SK-N-SH (cell line): ENCODE measurements at regions of chr3 and their contacts with region 1.

Region 1: DNA sequence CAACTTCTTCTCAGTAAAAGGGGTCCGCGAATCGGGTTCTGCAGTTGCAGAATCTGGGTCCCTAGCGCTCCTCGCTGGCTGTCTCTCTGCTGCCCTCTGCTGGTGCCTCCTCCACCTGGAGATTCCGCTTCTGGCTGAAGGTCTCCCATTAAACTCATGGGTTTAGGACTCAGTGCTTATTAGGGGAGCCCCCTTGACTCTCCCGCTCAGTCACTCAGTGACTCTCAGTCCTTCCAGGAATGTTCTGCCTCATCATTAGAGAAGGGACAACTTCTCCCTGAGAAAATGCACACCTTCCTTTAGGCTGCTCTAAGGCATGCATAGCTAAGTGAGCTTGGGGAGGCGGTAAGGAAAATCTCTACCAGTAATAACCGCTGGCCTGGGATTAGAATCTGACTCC is 7.1 kb downstream of the CPN2 start:
- DNase-seq: peak; percentile 91
- H3K4me3 ChIP-seq: no peak overlapping the region; a peak in 1 of 4 replicates
- H3K27ac ChIP-seq: no peak overlapping the region
- H3K4me1 ChIP-seq: peaks cover 0 to 9% of the 10 kb centered on the region in 2 experiments; a peak in 1 of 4 replicates
- H3K27me3 ChIP-seq: no peaks in the 10 kb centered on the region
- CTCF ChIP-seq: peak; percentile 97
- EP300 ChIP-seq: no peak
- RAD21 ChIP-seq: peak; percentile 68

Region 2: DNA sequence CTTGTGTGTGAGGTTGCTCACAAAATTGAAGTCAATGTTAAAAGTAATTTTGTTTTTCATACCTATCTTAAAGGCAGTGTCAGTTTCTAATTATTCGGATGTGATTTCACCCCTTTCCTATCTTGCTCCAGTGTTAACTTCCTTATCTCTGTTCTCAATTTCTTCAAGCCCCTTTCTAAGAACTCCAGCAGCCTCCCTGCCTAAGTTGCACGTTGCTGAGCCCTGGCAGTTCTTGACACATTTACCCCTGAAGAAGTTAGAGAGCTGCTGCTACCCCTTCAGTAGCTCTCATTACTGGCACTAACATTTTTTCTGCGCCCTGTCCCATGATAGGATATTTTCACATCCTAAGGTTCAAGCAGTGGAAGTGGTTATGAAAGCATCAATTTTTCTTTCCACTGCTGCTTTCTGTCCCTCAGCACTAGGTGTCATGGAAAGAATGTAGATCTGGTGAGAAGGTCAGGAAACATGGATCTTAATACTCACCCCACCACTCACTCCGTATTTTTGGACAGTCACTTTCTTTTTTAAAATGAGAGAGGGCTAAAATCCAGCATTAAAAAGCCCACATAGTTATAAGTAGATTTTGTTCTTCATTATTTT is 688.1 kb before region 1 on chr3:
- CTCF ChIA-PET with region 1: interaction called, 12 read pairs
- POLR2A ChIA-PET with region 1: no interaction called
- DNase-seq: no peak
- H3K4me3 ChIP-seq: no peak overlapping the region
- H3K27ac ChIP-seq: no peak overlapping the region
- H3K4me1 ChIP-seq: no peaks in the 10 kb centered on the region
- H3K27me3 ChIP-seq: no peaks in the 10 kb centered on the region
- CTCF ChIP-seq: no peak
- EP300 ChIP-seq: no peak
- RAD21 ChIP-seq: no peak

Region 3: GRCh38 chr3:194364652-194365434 is 20.8 kb after region 1 on chr3:
- CTCF ChIA-PET with region 1: interaction called, 85 read pairs
- POLR2A ChIA-PET with region 1: no interaction called
- DNase-seq: peak; percentile 72
- H3K4me3 ChIP-seq: no peak overlapping the region
- H3K27ac ChIP-seq: peak overlapping the region; percentile 20 to 74; a peak in 3 of 4 replicates
- H3K4me1 ChIP-seq: peaks cover 15 to 41% of the 10 kb centered on the region in 2 experiments; a peak in 3 of 4 replicates
- H3K27me3 ChIP-seq: no peaks in the 10 kb centered on the region; the same call in 1 of the 2 replicates
- CTCF ChIP-seq: no peak
- EP300 ChIP-seq: peak in 1 of 2 experiments; percentile 78; a peak in 2 of 4 replicates
- RAD21 ChIP-seq: no peak

Region 4: GRCh38 chr3:194376241-194376560 is 32.2 kb after region 1 on chr3:
- CTCF ChIA-PET with region 1: interaction called, 13 read pairs
- POLR2A ChIA-PET with region 1: no interaction called
- DNase-seq: no peak
- H3K4me3 ChIP-seq: no peak overlapping the region
- H3K27ac ChIP-seq: no peak overlapping the region
- H3K4me1 ChIP-seq: peaks cover 0 to 2% of the 10 kb centered on the region in 2 experiments; a peak in 1 of 4 replicates
- H3K27me3 ChIP-seq: no peaks in the 10 kb centered on the region; the same call in 1 of the 2 replicates
- CTCF ChIP-seq: no peak
- EP300 ChIP-seq: no peak
- RAD21 ChIP-seq: no peak

Region 5: GRCh38 chr3:194389269-194389668 is 45.3 kb after region 1 on chr3:
- CTCF ChIA-PET with region 1: interaction called, 71 read pairs
- POLR2A ChIA-PET with region 1: no interaction called
- DNase-seq: peak; percentile 10
- H3K4me3 ChIP-seq: no peak overlapping the region
- H3K27ac ChIP-seq: no peak overlapping the region
- H3K4me1 ChIP-seq: no peaks in the 10 kb centered on the region
- H3K27me3 ChIP-seq: no peaks in the 10 kb centered on the region
- CTCF ChIP-seq: no peak
- EP300 ChIP-seq: no peak
- RAD21 ChIP-seq: no peak

Region 6: GRCh38 chr3:194395778-194396547 is 52.0 kb after region 1 on chr3:
- CTCF ChIA-PET with region 1: interaction called, 326 read pairs
- POLR2A ChIA-PET with region 1: no interaction called
- DNase-seq: no peak
- H3K4me3 ChIP-seq: no peak overlapping the region
- H3K27ac ChIP-seq: no peak overlapping the region
- H3K4me1 ChIP-seq: no peaks in the 10 kb centered on the region; a peak in 1 of 4 replicates
- H3K27me3 ChIP-seq: no peaks in the 10 kb centered on the region
- CTCF ChIP-seq: no peak
- EP300 ChIP-seq: no peak
- RAD21 ChIP-seq: no peak